ENCODE measurements at regions of chr11 and their contacts with region 1.

Region 1: GRCh38 chr11:18972336-18972735 is 33.1 kb upstream of the MRGPRX1 start:
- DNase-seq: no peak
- H3K4me3 ChIP-seq: no peak overlapping the region
- H3K4me3 Mint-ChIP-seq: no peak overlapping the region
- H3K27ac ChIP-seq: no peak overlapping the region
- H3K27ac Mint-ChIP-seq: no peak overlapping the region
- H3K4me1 ChIP-seq: no peaks in the 10 kb centered on the region
- H3K4me1 Mint-ChIP-seq: no peaks in the 10 kb centered on the region
- H3K27me3 ChIP-seq: no peaks in the 10 kb centered on the region
- H3K27me3 Mint-ChIP-seq: peaks cover 0 to 2% (median 0%) of the 10 kb centered on the region in 3 donors
- CTCF ChIP-seq: no peak

Region 2: DNA sequence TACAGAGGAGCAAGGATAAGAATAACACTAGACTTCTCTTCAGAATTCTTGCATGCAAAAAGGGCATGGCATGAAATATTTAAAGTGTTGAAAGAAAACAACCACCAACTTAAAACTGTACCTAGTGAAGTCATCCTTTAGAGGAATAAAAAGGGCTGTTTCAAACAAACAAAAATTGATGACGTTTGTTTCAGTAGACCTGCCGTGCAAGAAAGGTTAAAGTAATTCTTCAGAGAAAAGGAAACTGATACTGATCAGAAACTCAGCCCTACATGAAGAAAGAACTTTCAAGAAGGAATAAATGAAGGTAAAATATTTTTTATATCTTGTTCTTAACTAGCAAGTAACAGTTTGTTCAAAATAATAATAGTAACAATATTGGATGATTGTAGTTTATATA is 60.7 kb after region 1 on chr11:
- intact Hi-C with region 1: loop called in 1 of 2 experiments (anchors 10 kb)
- DNase-seq: no peak
- H3K4me3 ChIP-seq: no peak overlapping the region
- H3K4me3 Mint-ChIP-seq: no peak overlapping the region
- H3K27ac ChIP-seq: no peak overlapping the region
- H3K27ac Mint-ChIP-seq: no peak overlapping the region
- H3K4me1 ChIP-seq: no peaks in the 10 kb centered on the region
- H3K4me1 Mint-ChIP-seq: peaks cover 2% of the 10 kb centered on the region
- H3K27me3 ChIP-seq: no peaks in the 10 kb centered on the region
- H3K27me3 Mint-ChIP-seq: peaks cover 4 to 8% (median 7%) of the 10 kb centered on the region in 3 donors
- CTCF ChIP-seq: no peak